ENCODE measurements at regions of chr18 and their contacts with region 1.

Region 1: DNA sequence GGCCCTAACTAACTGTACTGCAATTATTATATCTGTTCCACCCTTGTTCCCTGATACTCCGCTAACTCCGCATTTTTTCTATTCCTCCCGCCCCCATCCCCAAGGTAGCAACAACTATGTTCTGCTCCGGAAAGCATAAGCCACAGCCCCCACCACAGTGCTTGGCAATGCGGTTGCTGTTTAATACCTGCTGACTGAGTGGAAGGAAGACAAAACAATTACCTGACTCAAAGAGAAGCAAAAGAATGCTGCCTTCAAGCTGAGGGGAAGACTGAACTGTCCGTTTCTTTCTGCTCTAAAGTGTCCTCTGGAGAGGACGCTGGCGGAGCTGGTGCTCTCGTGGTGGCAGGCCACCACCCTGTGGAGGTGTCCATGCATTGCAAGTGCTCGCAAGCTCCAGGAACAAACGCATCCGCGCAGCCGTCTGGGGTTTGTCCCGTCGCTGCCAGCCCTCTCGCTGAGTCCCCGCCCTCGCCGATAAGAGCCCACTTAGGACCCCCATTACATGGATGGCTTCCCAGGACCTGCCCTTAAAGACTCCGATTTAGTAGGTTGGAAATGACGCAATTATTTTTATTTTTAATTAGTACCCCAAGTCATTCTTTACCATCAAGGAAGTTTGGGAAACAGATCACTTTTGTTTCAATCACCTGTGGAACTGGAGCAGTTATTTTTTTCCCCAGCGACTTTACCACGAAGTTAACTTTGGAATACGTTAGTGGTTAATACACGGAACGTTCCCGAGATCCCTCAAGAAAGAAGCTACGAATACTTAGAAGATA is 1.6 kb upstream of the MYL12A start:
- H3K4me3 ChIP-seq: peak overlapping the region; percentile 34
- H3K27ac ChIP-seq: no peak overlapping the region
- H3K4me1 ChIP-seq: peaks cover 9% of the 10 kb centered on the region
- CTCF ChIP-seq: peak; percentile 95

Region 2: DNA sequence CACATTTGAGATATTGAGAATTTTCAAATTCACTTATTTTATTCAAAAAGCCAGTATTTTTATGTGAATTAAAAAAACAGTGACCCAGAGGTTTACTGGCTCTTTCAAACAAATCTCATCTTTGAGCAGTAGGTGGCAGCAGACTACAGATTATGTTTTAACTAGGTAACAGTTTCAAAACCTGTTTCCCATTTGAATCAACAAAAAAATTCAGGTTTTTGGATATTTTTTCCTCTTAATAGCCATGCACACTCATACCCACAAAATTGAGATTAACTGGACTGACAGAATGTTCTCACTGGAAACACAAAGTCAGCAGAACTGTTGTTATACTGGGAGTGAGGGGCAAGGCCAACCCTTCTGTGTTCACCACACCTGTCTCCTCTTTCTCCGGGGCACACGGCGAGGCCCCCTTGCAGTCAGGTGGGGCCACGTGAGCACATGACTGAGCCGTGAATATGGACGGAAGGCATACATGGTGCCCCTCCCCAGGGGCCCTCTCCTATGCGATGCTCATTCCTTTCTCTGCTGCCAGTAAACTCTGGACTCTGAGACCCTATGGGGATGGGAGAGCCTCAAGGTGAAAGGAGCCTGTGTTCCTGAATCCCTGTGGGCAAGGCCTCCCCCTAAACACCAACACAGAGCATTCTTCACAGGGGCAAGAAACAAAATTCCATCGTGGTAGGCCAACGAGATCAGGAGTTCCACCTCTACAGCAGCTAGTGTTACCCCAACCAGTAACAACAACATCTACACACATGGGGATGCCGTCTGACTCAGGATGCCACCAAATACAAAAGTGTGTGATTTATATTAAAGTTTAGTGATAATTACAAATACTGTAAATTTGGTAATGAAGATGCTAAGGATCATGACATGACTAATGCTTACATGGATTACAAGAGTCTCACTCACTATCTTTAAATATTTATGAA is 313.5 kb before region 1 on chr18:
- CTCF ChIA-PET with region 1: interaction called, 84 read pairs
- POLR2A ChIA-PET with region 1: interaction called, 5 read pairs
- H3K4me3 ChIP-seq: no peak overlapping the region
- H3K27ac ChIP-seq: no peak overlapping the region
- H3K4me1 ChIP-seq: no peaks in the 10 kb centered on the region
- CTCF ChIP-seq: peak; percentile 33; the same call in 1 of the 2 replicates

Region 3: DNA sequence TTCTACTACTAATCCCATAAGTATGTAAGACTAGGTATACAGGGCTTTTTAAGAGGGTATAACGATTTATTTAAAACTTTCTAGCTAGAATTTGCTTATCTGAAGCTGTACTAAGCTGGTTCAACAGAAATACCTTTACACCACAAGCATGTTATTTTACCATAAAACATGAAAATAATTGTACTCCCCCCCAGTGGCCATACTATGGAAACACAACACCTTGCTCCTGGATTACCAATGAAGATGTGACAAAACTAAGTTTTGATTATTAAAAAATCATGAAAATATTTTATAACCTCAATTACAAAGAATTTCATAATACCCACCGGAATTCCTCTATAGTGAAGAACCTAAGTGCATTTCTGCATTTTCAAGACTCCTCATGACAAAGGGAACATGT is 260.4 kb before region 1 on chr18:
- CTCF ChIA-PET with region 1: interaction called, 10 read pairs
- POLR2A ChIA-PET with region 1: no interaction called
- H3K4me3 ChIP-seq: no peak overlapping the region
- H3K27ac ChIP-seq: no peak overlapping the region
- H3K4me1 ChIP-seq: peaks cover 20% of the 10 kb centered on the region
- CTCF ChIP-seq: no peak

Region 4: GRCh38 chr18:3261371-3262246 is 15.6 kb after region 1 on chr18 and contains the start of gene MYL12B:
- CTCF ChIA-PET with region 1: interaction called, 14 read pairs
- POLR2A ChIA-PET with region 1: interaction called, 18 read pairs
- H3K4me3 ChIP-seq: peak within 1 kb of the TSS; percentile 80
- H3K27ac ChIP-seq: peak within 1 kb of the TSS; percentile 97
- H3K4me1 ChIP-seq: peaks cover 19% of the 10 kb centered on the region
- CTCF ChIP-seq: peak; percentile 49; the same call in 1 of the 2 replicates

Region 5: GRCh38 chr18:3305354-3305762 is 59.3 kb after region 1 on chr18:
- CTCF ChIA-PET with region 1: no interaction called
- POLR2A ChIA-PET with region 1: no interaction called
- H3K4me3 ChIP-seq: no peak overlapping the region
- H3K27ac ChIP-seq: no peak overlapping the region
- H3K4me1 ChIP-seq: no peaks in the 10 kb centered on the region
- CTCF ChIP-seq: no peak

Measured in HEK293 (cell line).